HCT116 (cell line): ENCODE measurements at regions of chr12 and their contacts with region 1.

Region 1: DNA sequence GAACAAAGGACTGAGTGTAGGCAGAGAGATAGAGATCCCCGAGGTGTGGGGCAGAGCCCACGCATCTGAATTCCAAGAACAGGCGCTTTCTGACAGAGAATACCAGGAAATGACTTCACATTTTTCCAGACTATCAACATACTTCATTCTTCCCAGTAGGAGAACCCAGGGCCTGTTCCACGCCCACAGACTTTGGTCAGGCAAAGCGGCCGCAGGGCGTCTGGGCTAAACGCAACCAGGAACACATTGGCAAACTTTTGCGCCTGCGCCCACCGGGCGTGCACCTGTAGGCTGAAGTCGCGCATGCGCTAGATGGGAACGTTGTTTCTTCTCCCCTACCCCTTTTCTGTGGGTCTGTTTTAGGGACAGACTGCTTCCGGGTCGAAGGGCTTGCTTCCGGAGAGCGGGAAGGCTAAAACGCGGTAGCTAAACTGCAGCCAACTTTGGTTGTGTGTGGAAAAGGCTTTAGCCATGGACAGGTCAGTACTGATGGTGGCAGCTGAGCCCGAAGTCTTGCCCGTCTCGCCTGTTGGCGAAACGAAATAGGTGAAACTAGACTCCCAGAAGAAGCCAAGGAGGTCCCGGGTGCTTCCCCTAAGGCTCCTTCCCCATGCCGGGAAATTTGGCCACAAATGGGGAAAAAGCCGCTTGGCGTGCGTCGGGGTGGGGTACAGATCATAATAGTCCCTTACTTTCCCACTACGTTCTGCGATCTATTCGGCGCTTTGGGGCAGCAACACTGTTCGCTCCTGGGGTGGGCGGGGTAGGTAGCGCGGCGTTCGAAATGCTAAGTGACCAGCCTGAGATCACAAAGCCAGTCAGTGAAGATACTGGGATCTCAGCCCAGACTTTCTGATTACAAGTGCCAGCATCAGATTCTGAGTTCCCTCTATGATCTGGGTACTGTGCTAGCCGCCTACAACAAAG is at the start of gene NUP107:
- DNase-seq: peak; percentile 97
- ATAC-seq: peak; percentile 91
- H3K4me3 ChIP-seq: peak within 1 kb of the TSS; percentile 77 to 99
- H3K27ac ChIP-seq: peak within 1 kb of the TSS; percentile 72
- H3K4me1 ChIP-seq: peaks cover 16 to 18% of the 10 kb centered on the region in 2 experiments; a peak in 3 of 4 replicates
- H3K27me3 ChIP-seq: no peaks in the 10 kb centered on the region
- CTCF ChIP-seq: 0 out of 6 replicates have a peak, but pooled peaks of 1 of the 3 experiments have one; percentile 2
- POLR2A ChIP-seq: peak; percentile 76
- RAD21 ChIP-seq: 0 out of 2 replicates have a peak, but pooled peaks have one; percentile 3
- total RNA-seq, gene NUP107: 99.0 TPM

Region 2: GRCh38 chr12:68317047-68317667 is 369.7 kb before region 1 on chr12:
- CTCF ChIA-PET with region 1: no interaction called
- POLR2A ChIA-PET with region 1: no interaction called
- RAD21 ChIA-PET with region 1: no interaction called
- intact Hi-C with region 1: no loop called
- DNase-seq: peak; percentile 27
- ATAC-seq: no peak
- H3K4me3 ChIP-seq: no peak overlapping the region
- H3K27ac ChIP-seq: no peak overlapping the region
- H3K4me1 ChIP-seq: no peaks in the 10 kb centered on the region
- H3K27me3 ChIP-seq: no peaks in the 10 kb centered on the region
- CTCF ChIP-seq: peak; percentile 49 to 63 (median 60); a peak in 5 of 6 replicates
- POLR2A ChIP-seq: no peak
- RAD21 ChIP-seq: peak; percentile 63

Region 3: DNA sequence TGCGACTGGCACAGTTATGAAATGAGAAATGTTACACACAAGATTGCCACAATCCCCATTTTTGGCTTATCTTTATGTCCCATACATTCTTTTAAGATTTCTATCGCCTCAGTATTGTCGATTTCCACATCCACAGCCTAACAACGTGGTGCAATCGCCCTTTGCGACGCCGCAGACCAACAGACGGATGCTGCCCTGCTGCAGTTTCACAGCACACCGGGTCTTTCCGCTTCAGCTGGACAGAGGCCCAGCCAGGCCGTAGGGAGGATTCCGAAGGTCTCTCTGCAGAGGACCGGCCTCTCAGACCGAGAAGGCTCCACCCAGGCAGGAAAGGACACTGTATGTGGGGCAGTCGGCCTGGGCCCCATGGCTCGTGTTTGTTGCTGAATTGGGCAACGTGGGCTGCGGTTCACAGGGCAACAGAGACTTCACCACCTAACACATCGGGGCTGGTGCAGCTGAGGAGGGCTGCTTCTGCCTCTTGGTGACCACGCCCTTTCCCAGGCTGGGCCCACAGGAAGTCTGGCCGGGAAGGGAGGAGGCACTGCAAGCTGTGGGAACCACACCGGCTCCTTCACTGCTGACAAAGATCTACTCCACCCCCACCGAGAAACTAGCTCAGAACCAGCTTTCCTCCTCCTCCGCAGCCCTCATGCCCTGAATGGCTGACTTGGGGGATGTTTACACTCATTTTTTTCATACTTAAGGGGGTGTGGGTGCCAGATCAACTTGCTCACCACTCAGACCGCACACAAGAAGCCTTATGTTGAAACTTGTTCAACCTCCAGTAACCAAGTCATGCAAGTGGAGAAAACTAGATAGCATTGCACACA is 321.7 kb before region 1 on chr12:
- CTCF ChIA-PET with region 1: no interaction called
- POLR2A ChIA-PET with region 1: no interaction called
- RAD21 ChIA-PET with region 1: no interaction called
- intact Hi-C with region 1: loop called (anchors 2 kb)
- DNase-seq: peak; percentile 57
- ATAC-seq: peak; percentile 100
- H3K4me3 ChIP-seq: peak overlapping the region; percentile 39 to 56
- H3K27ac ChIP-seq: peak overlapping the region; percentile 46; the same call in 1 of the 2 replicates
- H3K4me1 ChIP-seq: peaks cover 7 to 16% of the 10 kb centered on the region in 2 experiments; a peak in 3 of 4 replicates
- H3K27me3 ChIP-seq: no peaks in the 10 kb centered on the region
- CTCF ChIP-seq: no peak
- POLR2A ChIP-seq: peak; percentile 62
- RAD21 ChIP-seq: no peak

Region 4: GRCh38 chr12:68505970-68506369 is 180.9 kb before region 1 on chr12:
- CTCF ChIA-PET with region 1: no interaction called
- POLR2A ChIA-PET with region 1: no interaction called
- RAD21 ChIA-PET with region 1: no interaction called
- intact Hi-C with region 1: no loop called
- DNase-seq: no peak
- ATAC-seq: no peak
- H3K4me3 ChIP-seq: no peak overlapping the region
- H3K27ac ChIP-seq: no peak overlapping the region
- H3K4me1 ChIP-seq: no peaks in the 10 kb centered on the region
- H3K27me3 ChIP-seq: no peaks in the 10 kb centered on the region
- CTCF ChIP-seq: no peak
- POLR2A ChIP-seq: no peak
- RAD21 ChIP-seq: no peak